ENCODE measurements at regions of chr14 and their contacts with region 1.

Region 1: GRCh38 chr14:72812292-72812911 is 81.5 kb downstream of the DPF3 start:
- DNase-seq: peak; percentile 71 to 95 (median 79)
- ATAC-seq: peak; percentile 93 to 96 (median 94)
- H3K4me3 ChIP-seq: peak overlapping the region in 3 of 12 donors; percentile 0 to 29 (median 9)
- H3K27ac ChIP-seq: peak overlapping the region; percentile 72 to 95 (median 81)
- H3K4me1 ChIP-seq: peaks cover 0 to 75% (median 28%) of the 10 kb centered on the region in 12 donors
- H3K27me3 ChIP-seq: no peaks in the 10 kb centered on the region
- CTCF ChIP-seq: peak in 2 of 12 donors; percentile 28 to 32
- POLR2A ChIP-seq: peak in 1 of 2 donors; percentile 40

Region 2: GRCh38 chr14:72714094-72714493 is 98.3 kb before region 1 on chr14:
- intact Hi-C with region 1: loop called in 1 of 10 experiments (anchors 10 kb)
- DNase-seq: no peak
- ATAC-seq: no peak
- H3K4me3 ChIP-seq: no peak overlapping the region
- H3K27ac ChIP-seq: peak overlapping the region in 11 of 12 donors; percentile 74 to 93 (median 89)
- H3K4me1 ChIP-seq: peaks cover 0 to 66% (median 32%) of the 10 kb centered on the region in 12 donors
- H3K27me3 ChIP-seq: no peaks in the 10 kb centered on the region
- CTCF ChIP-seq: no peak
- POLR2A ChIP-seq: no peak

Region 3: GRCh38 chr14:72723858-72724530 is 88.4 kb before region 1 on chr14:
- intact Hi-C with region 1: loop called in 2 of 10 experiments (anchors 10 kb)
- DNase-seq: no peak
- ATAC-seq: no peak
- H3K4me3 ChIP-seq: no peak overlapping the region
- H3K27ac ChIP-seq: peak overlapping the region in 5 of 12 donors; percentile 13 to 29 (median 18)
- H3K4me1 ChIP-seq: peaks cover 0 to 57% (median 19%) of the 10 kb centered on the region in 12 donors
- H3K27me3 ChIP-seq: no peaks in the 10 kb centered on the region
- CTCF ChIP-seq: no peak
- POLR2A ChIP-seq: no peak

Region 4: DNA sequence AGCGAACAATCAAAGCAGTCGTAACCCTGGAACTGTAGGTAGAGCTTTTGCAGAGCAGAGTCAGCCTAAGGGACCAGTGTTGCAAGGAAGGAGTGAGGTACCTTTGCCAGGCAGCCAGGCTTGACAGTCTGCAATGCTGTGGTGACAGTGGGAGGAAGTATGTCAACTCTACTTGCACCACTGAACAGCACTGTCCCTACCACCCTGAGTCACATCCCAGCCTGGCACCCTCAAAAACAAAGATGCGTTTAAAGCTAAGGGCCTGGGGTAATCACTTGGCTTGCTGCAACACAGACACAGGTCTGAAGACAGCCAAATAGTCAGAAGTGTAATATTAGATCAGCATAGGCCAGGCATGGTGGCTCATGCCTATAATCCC is 60.4 kb before region 1 on chr14:
- intact Hi-C with region 1: no loop called
- DNase-seq: no peak
- ATAC-seq: peak in 3 of 4 donors; percentile 22 to 38 (median 27)
- H3K4me3 ChIP-seq: no peak overlapping the region
- H3K27ac ChIP-seq: no peak overlapping the region
- H3K4me1 ChIP-seq: peaks cover 0 to 14% (median 0%) of the 10 kb centered on the region in 12 donors
- H3K27me3 ChIP-seq: no peaks in the 10 kb centered on the region
- CTCF ChIP-seq: no peak
- POLR2A ChIP-seq: no peak

Region 5: GRCh38 chr14:72776701-72777261 is 35.6 kb before region 1 on chr14:
- intact Hi-C with region 1: no loop called
- DNase-seq: no peak
- ATAC-seq: no peak
- H3K4me3 ChIP-seq: no peak overlapping the region
- H3K27ac ChIP-seq: peak overlapping the region in 1 of 12 donors; percentile 18
- H3K4me1 ChIP-seq: peaks cover 0 to 55% (median 16%) of the 10 kb centered on the region in 12 donors
- H3K27me3 ChIP-seq: no peaks in the 10 kb centered on the region
- CTCF ChIP-seq: no peak
- POLR2A ChIP-seq: no peak

Region 6: DNA sequence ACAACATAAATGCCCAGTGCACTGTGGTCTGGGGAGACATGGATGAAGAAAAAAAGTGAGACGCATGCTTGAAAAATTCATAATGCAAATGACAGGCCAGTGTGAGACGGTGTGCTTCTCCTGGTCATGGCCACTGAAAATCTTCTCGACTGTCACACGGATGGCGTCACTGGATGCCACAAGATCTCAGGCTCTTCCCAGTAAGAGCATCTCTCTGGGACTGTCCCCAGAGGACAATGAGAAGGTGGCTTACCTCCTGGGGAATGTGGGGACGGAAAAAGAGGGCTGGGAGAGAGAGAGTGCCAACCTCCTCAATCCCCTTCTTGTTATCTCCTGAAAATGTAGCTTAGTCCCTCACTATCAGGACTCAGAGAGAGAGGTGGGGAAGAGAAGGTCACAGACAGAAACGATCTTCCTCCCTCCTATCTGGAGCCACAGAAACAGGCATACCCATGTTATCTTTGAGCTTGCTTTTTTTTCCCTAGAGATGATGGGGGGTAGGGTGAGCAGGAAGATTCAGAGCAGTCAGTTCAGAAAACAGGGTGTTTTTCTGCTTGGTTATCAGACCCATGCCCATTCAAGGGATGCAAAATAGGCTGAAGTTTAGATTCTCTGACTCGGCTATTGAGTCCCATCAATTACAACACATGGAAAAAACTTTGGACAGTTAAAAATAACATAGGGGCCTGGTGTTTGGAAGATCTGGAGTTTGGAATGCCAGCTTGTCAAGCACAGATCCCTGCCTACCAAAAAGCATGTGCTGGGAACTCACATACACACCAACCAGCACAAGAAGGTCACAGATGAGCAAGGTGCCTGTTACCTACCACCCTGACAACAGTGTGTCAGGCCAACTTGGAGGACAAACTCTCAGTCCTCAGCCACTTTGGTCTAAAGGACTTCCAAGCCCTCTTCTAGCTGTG is 57.3 kb after region 1 on chr14:
- intact Hi-C with region 1: no loop called
- DNase-seq: peak in 3 of 5 donors; percentile 25 to 44 (median 41)
- ATAC-seq: peak; percentile 82 to 89 (median 86)
- H3K4me3 ChIP-seq: no peak overlapping the region
- H3K27ac ChIP-seq: peak overlapping the region; percentile 64 to 94 (median 79)
- H3K4me1 ChIP-seq: peaks cover 0 to 61% (median 9%) of the 10 kb centered on the region in 12 donors
- H3K27me3 ChIP-seq: no peaks in the 10 kb centered on the region
- CTCF ChIP-seq: no peak
- POLR2A ChIP-seq: no peak

Region 7: DNA sequence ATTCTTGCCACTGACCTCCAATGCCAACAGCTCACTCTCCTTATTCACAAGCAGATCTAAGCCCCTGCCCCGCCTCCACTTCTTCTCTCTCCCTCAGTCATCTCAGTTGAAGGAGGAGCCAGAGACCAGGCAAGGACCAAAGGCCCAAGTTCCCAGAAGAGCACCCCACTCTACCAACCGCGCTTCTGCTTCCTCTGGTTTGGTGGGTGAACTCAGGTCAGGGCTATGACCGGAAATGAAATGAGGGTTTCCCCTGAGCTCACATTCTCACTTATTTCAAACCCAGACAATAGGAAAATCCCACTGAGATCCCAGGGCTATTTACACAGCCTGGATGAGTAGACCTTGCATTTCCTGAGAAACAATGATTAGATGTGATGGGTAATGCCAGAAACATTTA is 71.6 kb after region 1 on chr14:
- intact Hi-C with region 1: loop called in 1 of 10 experiments (anchors 10 kb)
- DNase-seq: no peak
- ATAC-seq: peak in 1 of 4 donors; percentile 8
- H3K4me3 ChIP-seq: no peak overlapping the region
- H3K27ac ChIP-seq: peak overlapping the region in 5 of 12 donors; percentile 25 to 64 (median 41)
- H3K4me1 ChIP-seq: peaks cover 0 to 59% (median 15%) of the 10 kb centered on the region in 12 donors
- H3K27me3 ChIP-seq: peaks cover 0 to under 1% (median 0%) of the 10 kb centered on the region in 9 donors
- CTCF ChIP-seq: no peak
- POLR2A ChIP-seq: no peak

Measured in heart left ventricle (tissue), 16 donors.